A673 (cell line): ENCODE measurements at regions of chr3 and their contacts with region 1.

Region 1: GRCh38 chr3:190566043-190566933 is 52.4 kb downstream of the IL1RAP start:
- DNase-seq: peak; percentile 99
- H3K4me3 ChIP-seq: no peak overlapping the region
- H3K27ac ChIP-seq: peak overlapping the region; percentile 71
- H3K4me1 ChIP-seq: peaks cover 67% of the 10 kb centered on the region
- H3K27me3 ChIP-seq: no peaks in the 10 kb centered on the region
- CTCF ChIP-seq: no peak

Region 2: DNA sequence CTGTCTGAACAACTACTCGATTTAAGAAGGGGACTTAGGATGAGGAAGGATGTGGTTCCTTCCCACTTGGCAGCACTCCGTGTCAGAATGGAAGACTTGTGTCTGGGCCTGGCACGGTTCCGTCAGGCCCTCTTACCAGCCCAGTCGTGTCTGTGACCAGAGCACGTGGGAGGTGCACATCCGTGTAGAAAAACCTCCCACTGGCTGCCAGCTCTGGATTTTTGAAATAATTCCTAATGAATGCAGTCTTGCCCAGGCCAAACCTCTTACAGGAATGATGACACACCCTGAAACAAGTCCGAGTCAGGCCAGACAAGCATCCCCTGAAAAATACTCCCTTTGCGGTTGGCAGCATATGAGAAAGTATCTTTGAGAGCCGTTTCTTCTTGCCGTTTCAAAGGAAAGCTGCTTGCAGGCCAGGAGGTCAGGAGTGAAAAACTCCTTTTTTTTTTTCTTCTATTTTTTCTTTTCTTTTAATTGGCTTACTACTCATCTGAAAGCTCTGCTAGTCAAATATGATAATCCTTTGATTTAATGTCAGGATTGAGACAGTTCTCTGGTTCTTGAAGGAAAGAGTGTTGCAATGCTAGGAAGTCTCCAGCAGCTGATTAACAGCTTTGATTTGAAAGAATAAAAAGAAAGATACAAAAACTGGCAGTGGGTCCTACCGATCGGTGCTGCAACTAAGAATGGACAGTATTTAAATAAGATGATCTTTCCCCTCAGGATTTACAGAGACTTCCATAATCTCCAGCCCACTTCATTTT is 32.6 kb before region 1 on chr3:
- CTCF ChIA-PET with region 1: no interaction called
- POLR2A ChIA-PET with region 1: interaction called, 6 read pairs
- intact Hi-C with region 1: loop called (anchors 5 kb)
- DNase-seq: peak; percentile 95
- H3K4me3 ChIP-seq: peak overlapping the region; percentile 31
- H3K27ac ChIP-seq: peak overlapping the region; percentile 93
- H3K4me1 ChIP-seq: peaks cover 94% of the 10 kb centered on the region
- H3K27me3 ChIP-seq: no peaks in the 10 kb centered on the region
- CTCF ChIP-seq: no peak